Panc1 (cell line): ENCODE measurements at regions of chr1 and their contacts with region 1.

Region 1: DNA sequence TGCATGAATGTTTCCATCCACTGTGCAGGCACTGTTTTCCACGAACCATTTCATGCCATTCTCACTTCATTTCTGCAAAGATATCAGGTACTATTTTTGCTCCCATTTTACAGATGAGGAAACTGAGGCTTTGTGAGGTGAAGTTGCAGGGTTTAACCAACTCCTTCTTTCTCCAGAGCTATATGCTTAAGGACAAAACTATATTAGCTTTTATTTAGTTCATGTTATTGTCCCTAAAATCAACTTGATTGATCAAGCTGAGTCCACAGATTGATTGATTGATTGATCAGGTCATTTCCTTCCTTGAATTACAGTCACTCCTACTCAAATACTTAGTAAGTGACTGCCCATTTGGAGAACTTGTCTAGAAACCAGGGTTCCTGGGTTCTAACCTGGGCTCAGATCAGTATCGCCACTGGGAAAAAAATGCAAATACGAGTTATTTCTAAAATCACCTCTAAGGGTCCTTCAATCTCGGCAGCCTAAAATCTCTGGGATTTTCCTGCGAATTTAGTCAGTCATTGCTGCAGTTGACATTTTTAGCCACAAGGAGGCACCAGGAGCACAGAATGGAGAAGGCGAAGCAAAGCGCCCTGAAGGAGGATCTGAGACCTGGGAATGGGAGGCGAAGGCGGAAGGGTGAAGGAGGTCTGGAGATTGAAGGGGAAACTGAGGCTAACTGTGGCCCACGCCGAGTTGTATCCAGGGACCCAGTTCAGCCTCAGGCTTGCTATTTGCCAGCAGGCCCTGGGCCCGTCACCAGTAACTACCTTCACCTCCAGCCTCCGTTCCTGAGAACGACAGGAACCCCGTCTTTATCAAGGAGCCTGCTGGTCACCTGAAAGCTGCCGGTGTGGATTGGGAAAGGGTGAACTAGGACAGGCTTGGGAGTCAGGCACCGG is 14.3 kb upstream of the MUL1 start:
- DNase-seq: peak; percentile 74
- ATAC-seq: peak; percentile 91
- H3K4me3 ChIP-seq: no peak overlapping the region
- H3K27ac ChIP-seq: no peak overlapping the region
- H3K4me1 ChIP-seq: no peaks in the 10 kb centered on the region
- H3K27me3 ChIP-seq: peaks cover 3% of the 10 kb centered on the region; the same call in 1 of the 2 replicates
- CTCF ChIP-seq: peak; percentile 96

Region 2: DNA sequence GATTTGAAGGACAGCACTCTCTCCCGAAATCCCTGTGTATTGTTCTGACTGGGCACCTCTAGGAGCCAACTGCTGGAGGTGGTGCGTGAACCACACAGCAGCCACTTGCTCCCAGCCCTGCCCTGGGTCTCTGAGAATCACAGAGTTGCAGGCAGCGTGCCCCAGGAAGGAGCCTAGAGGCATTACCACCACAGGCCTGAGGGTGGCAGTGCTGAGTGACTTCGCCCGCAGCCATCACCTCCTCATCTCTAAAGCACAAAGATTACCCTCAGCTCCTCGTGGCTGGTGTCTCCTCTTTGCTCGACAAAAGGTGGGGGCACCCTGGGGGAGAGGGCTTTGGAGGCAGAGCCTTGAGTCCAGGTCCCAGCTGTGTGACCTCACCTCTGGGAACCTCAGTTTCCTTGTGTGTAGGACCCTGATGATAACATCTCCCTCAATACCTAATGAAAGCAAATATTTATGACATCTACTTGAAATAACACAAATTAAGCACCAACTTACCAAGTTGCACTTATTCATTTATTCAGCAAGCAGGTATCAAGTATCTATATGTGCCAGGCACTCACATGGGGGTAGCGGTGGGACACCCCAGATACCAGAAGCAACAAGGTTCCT is 145.2 kb before region 1 on chr1:
- CTCF ChIA-PET with region 1: no interaction called
- POLR2A ChIA-PET with region 1: no interaction called
- in situ Hi-C with region 1: no loop called
- intact Hi-C with region 1: no loop called
- DNase-seq: peak; percentile 28
- ATAC-seq: peak; percentile 90
- H3K4me3 ChIP-seq: no peak overlapping the region
- H3K27ac ChIP-seq: no peak overlapping the region
- H3K4me1 ChIP-seq: no peaks in the 10 kb centered on the region
- H3K27me3 ChIP-seq: peaks cover 3% of the 10 kb centered on the region
- CTCF ChIP-seq: peak; percentile 92

Region 3: GRCh38 chr1:20640183-20640597 is 118.0 kb after region 1 on chr1:
- CTCF ChIA-PET with region 1: no interaction called
- POLR2A ChIA-PET with region 1: no interaction called
- in situ Hi-C with region 1: no loop called
- intact Hi-C with region 1: loop called (anchors 1 kb)
- DNase-seq: peak; percentile 38
- ATAC-seq: peak; percentile 85
- H3K4me3 ChIP-seq: no peak overlapping the region
- H3K27ac ChIP-seq: no peak overlapping the region
- H3K4me1 ChIP-seq: no peaks in the 10 kb centered on the region
- H3K27me3 ChIP-seq: no peaks in the 10 kb centered on the region
- CTCF ChIP-seq: peak; percentile 91

Region 4: GRCh38 chr1:21244986-21245687 is 722.9 kb after region 1 on chr1:
- CTCF ChIA-PET with region 1: no interaction called
- POLR2A ChIA-PET with region 1: interaction called, 14 read pairs
- in situ Hi-C with region 1: no loop called
- intact Hi-C with region 1: no loop called
- DNase-seq: no peak
- ATAC-seq: no peak
- H3K4me3 ChIP-seq: no peak overlapping the region
- H3K27ac ChIP-seq: no peak overlapping the region
- H3K4me1 ChIP-seq: 0 out of 2 replicates have a peak, but pooled peaks cover 9% of the 10 kb centered on the region
- H3K27me3 ChIP-seq: no peaks in the 10 kb centered on the region
- CTCF ChIP-seq: no peak